ENCODE measurements at regions of chr10 and their contacts with region 1.

Region 1: DNA sequence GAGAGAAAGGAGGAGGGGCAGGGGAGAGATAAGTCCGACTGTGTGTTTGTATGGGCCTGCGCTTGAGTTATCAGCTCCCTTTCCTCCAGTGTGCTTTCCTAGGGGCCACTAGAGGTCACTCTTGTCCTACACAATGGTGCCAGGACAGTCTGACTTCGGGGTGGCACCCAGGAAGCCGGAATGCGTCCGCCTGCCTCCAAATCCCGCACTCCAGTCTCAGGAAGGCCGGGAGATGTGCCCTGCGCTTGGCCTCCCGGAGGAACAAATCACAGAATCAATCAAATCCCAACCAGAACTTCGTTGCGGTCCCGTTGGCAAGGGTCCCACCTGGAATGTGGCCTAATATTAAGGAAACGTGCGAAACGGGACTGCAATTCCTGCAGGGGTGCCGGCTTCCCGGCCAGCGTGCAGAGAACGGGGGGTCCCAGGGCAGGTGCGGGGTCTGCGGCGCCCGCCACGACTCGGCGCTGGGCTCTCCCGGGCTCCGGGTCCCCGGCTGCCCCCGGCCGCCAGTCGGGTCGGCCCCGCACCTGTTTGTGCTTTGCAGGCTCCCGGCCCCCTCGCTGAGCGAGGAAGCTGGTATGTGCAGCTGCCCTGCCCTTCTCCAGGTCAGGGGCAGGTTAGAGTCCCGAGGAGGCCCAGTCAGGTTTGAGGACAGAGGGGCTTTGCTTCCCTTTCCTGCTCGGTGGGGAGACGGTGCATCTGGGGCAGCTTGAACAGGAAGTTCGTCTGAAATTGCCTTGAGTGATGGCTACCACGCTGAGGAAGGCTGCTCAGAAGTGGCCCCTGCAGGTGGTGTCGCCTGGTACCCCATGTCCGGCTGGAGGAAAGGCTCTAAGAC is 21.0 kb upstream of the HPS1 start:
- DNase-seq: peak; percentile 44
- H3K4me3 Mint-ChIP-seq: peak overlapping the region; percentile 85
- H3K27ac Mint-ChIP-seq: no peak overlapping the region
- H3K4me1 Mint-ChIP-seq: peaks cover 14% of the 10 kb centered on the region
- H3K27me3 Mint-ChIP-seq: peaks cover 32% of the 10 kb centered on the region

Region 2: DNA sequence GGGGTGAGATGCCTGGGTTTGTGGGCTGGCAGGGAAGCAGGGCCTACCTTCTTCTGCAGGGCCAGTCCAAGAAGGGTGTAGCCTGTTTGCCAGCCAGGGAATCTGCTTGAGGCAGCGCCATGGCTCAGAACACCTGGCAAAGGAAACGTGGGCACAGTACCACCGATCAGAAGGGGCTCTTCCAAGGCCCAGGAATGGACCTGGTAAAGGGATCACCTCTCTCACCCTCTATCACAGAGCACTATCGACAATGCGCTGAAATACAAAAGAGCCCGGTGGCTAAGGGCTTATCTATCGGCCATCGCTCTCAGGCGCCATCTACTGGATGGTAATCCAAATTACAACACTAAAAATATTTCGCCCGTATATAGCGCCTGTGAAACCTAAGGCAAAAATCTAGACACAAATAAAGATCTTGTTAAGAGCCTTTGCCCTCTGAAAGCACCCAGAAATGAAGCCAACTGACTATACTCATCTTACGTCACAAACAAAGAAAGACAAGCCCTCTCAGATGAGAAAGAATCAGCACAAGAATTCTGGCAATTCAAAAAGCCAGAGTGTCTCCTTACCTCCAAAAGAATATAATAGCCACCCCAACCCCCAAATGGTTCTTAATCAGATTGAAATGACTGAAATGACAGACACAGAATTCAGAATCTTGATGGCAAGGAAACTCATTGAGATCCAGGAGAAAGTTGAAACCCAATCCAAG is 196.8 kb after region 1 on chr10:
- intact Hi-C with region 1: loop called (anchors 1 kb)
- DNase-seq: peak; percentile 4
- H3K4me3 Mint-ChIP-seq: no peak overlapping the region
- H3K27ac Mint-ChIP-seq: no peak overlapping the region
- H3K4me1 Mint-ChIP-seq: no peaks in the 10 kb centered on the region
- H3K27me3 Mint-ChIP-seq: peaks cover 27% of the 10 kb centered on the region

Region 3: DNA sequence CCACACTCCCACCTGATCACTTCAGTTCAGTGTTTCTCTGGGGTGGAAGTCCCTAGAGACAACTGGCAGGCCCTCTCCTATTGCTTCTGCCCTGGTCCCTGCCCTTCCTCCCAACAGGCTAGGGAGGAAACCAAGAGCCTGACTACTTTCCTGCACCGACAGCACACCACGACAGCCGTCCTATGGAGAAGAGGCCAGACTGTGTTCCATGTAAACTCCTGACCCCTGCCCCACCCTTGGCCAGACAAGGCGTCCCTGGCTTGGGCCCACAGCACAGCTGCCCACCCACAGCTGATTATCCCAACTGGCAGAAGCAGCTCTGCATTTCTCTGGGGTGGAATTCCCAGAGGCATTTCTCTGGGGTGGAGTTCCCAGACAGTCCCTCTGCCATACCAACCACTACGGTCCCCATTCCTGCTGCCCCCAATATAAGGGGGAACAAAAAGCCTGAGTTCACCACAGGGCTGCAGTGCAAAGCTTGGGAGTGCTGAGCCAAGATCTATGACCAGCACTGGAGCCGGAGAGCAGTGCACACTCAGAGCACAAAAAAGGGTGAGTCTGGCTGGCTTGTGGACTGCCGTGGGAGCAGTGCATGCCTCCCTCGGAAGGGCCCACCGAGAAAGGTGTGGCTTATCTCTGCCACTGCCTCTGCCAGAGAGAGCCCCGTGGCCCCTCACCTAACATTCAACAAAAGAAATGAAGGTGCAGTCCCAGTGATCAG is 574.5 kb after region 1 on chr10:
- intact Hi-C with region 1: loop called (anchors 1 kb)
- DNase-seq: no peak
- H3K4me3 Mint-ChIP-seq: no peak overlapping the region
- H3K27ac Mint-ChIP-seq: no peak overlapping the region
- H3K4me1 Mint-ChIP-seq: no peaks in the 10 kb centered on the region
- H3K27me3 Mint-ChIP-seq: peaks cover 2% of the 10 kb centered on the region

Region 4: GRCh38 chr10:99248824-99249223 is 781.1 kb after region 1 on chr10:
- intact Hi-C with region 1: loop called (anchors 1 kb)
- DNase-seq: no peak
- H3K4me3 Mint-ChIP-seq: no peak overlapping the region
- H3K27ac Mint-ChIP-seq: no peak overlapping the region
- H3K4me1 Mint-ChIP-seq: no peaks in the 10 kb centered on the region
- H3K27me3 Mint-ChIP-seq: peaks cover 5% of the 10 kb centered on the region